ENCODE measurements at regions of chr5 and their contacts with region 1.

Region 1: DNA sequence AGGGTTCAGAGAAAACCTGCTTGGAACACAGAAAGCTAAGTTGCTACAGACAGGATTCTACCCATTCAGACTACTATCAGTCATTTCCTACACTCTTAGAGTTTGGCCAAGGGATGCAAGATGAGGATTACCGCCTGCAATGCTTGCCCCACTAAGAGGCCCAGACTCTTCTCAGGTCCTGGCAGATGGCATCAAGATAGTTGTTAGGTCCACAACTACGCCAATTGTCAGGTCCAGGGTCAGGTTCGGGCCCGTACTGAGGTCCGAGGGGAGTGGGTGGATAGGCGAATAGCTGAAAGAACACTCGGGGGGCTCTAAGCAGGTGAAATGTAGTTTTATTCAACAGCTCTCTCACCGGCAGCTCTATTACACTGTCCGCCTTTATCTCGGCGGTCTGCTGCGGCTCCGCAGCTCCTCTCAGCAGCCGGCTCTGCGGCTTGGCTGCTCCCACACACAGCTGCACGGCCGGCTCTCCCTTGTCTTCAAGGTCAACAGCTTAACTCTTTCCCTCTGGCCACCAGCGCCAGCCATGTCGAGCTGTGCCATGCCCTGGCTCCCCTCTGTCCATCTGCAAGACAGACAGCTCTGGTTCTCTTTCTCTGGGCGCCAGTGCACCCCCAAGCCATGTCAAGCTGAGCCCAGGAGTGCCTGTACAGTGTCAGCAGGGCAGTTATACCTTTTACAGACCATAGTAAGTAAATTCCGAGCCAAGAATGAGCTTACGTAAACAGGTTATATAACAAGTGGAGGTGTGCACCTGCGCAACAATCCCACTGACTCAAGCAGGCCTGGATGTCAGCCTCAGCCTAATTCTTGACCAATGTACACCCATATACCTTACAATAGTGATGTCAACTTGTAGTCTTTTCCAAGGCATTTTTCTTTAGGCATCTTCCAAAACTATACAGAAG is 24.0 kb downstream of the ENC1 start:
- DNase-seq: no peak
- H3K4me3 ChIP-seq: no peak overlapping the region
- H3K27ac ChIP-seq: no peak overlapping the region
- H3K4me1 ChIP-seq: no peaks in the 10 kb centered on the region
- H3K27me3 ChIP-seq: no peaks in the 10 kb centered on the region
- CTCF ChIP-seq: no peak
- POLR2A ChIP-seq: no peak

Region 2: DNA sequence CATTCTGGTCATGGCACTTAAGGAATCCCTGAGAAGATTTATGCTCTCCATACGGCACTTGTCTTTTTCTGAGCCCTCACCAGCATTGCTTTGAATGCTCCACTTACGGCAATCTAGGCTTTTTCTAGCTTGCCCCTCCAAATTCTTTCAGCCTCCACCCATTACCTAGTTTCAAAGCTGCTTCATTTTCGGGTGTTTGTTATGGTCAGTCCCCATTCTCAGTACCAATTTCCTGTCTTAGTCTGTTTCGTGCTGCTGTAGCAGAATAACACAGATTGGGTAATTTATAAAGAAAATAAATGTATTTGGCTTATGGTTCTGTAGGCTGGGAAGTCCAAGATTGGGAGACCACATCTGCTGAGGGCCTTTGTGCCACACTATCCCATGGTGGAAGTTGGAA is 948.5 kb before region 1 on chr5:
- intact Hi-C with region 1: loop called (anchors 5 kb)
- DNase-seq: no peak
- H3K4me3 ChIP-seq: no peak overlapping the region
- H3K27ac ChIP-seq: no peak overlapping the region
- H3K4me1 ChIP-seq: no peaks in the 10 kb centered on the region
- H3K27me3 ChIP-seq: no peaks in the 10 kb centered on the region
- CTCF ChIP-seq: no peak
- POLR2A ChIP-seq: no peak

Region 3: GRCh38 chr5:74934949-74935751 is 318.7 kb after region 1 on chr5:
- intact Hi-C with region 1: no loop called
- DNase-seq: no peak
- H3K4me3 ChIP-seq: no peak overlapping the region
- H3K27ac ChIP-seq: peak overlapping the region in 1 of 2 donors; percentile 20
- H3K4me1 ChIP-seq: no peaks in the 10 kb centered on the region
- H3K27me3 ChIP-seq: no peaks in the 10 kb centered on the region
- CTCF ChIP-seq: no peak
- POLR2A ChIP-seq: no peak

Region 4: GRCh38 chr5:74953940-74954720 is 337.6 kb after region 1 on chr5:
- intact Hi-C with region 1: no loop called
- DNase-seq: no peak
- H3K4me3 ChIP-seq: no peak overlapping the region
- H3K27ac ChIP-seq: no peak overlapping the region
- H3K4me1 ChIP-seq: no peaks in the 10 kb centered on the region
- H3K27me3 ChIP-seq: no peaks in the 10 kb centered on the region
- CTCF ChIP-seq: no peak
- POLR2A ChIP-seq: no peak

Region 5: DNA sequence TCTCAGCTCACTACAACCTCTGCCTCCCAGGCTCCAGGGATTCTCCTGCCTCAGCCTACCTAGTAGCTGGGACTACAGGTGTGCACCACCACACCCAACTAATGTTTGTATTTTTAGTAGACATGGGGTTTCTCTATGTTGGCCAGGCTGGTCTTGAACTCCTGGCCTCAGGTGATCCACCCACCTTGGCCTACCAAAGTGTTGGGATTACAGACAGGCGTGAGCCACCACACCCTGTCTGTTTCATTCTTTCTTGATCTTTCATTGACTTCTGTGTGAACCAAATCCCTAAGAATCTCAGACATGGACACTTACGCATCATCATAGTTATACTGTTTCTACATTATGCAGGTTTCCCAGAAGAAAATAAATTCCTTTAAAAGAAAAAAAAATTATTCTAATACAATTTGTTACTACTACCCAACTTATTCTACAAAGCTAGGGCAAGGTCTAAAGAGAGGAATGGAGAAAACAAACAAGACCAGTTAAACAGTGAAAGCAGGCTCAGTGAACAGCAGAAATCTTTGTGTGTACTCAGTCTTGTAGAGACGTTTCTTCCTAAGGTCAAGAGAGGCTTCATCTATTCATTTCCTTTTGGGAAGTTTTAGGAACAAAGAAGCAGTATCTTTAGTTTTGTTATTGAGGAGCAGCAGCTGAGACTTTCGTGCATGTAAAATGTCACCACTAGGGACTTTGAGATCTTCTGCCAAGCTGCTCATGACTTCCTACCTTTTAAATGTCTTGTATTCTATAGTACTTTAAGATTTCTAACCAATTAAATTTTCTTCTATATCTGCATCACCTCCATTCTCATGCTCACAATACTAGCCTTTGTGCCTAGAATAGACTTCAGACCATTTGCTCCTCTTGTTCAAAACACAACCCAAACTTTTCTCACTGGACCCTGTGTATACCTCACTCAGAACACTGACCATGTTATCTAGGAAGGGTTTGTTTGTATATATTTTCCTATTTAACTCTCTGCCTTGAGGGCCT is 714.9 kb after region 1 on chr5:
- intact Hi-C with region 1: no loop called
- DNase-seq: no peak
- H3K4me3 ChIP-seq: no peak overlapping the region
- H3K27ac ChIP-seq: no peak overlapping the region
- H3K4me1 ChIP-seq: no peaks in the 10 kb centered on the region
- H3K27me3 ChIP-seq: no peaks in the 10 kb centered on the region
- CTCF ChIP-seq: no peak
- POLR2A ChIP-seq: no peak